Activated CD4-positive, alpha-beta T cell treated with anti-CD3 and anti-CD28 coated beads, Interleukin-2, amount 10 ng/mL, durations not matched to agents 24 days and 14 days (primary cell): ENCODE measurements at regions of chr17 and their contacts with region 1.

Region 1: DNA sequence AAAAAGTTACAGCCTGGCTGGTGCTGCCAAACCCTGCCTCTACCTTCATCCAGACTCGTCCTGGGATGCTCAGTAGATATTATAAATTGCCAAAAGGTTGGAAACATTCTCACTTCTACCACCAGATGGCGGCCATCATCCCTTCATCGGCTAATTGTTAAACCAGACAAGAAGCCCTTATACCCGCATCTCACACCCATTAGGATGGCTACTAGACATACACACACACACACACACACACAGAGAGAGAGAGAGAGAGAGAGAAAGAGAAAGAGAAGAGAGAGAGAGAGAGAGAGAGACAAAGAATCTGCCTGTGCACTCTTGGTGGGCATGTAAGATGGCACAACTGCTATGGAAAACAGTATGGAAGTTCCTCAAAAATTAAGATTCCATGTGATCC is 15.0 kb upstream of the SCIMP start:
- DNase-seq: peak; percentile 89
- H3K4me3 Mint-ChIP-seq: no peak overlapping the region
- H3K27ac Mint-ChIP-seq: no peak overlapping the region
- H3K4me1 Mint-ChIP-seq: peaks cover 3% of the 10 kb centered on the region
- H3K27me3 Mint-ChIP-seq: no peaks in the 10 kb centered on the region

Region 2: DNA sequence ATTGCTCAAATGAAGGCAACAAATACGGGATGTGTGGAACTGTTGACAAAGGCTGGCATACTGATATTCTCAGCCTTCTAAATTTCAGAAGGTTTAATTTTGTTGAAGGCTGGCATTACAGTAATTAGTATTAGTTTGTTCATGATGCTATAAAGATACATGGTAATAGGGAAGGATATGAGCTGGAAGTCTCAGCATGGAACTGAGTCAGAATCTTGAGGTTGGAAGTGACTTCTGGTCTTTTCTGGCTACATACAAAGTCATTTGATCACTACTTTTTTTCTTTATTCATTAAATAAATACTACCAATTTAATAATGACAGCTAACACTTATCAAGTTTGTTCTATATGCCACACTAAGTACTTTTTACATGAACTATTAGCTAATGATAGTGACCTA is 55.0 kb after region 1 on chr17:
- intact Hi-C with region 1: loop called (anchors 10 kb)
- DNase-seq: no peak
- H3K4me3 Mint-ChIP-seq: no peak overlapping the region
- H3K27ac Mint-ChIP-seq: no peak overlapping the region
- H3K4me1 Mint-ChIP-seq: peaks cover 15% of the 10 kb centered on the region
- H3K27me3 Mint-ChIP-seq: no peaks in the 10 kb centered on the region

Region 3: GRCh38 chr17:5364156-5364555 is 114.5 kb after region 1 on chr17:
- intact Hi-C with region 1: loop called (anchors 10 kb)
- DNase-seq: no peak
- H3K4me3 Mint-ChIP-seq: no peak overlapping the region
- H3K27ac Mint-ChIP-seq: no peak overlapping the region
- H3K4me1 Mint-ChIP-seq: no peaks in the 10 kb centered on the region
- H3K27me3 Mint-ChIP-seq: no peaks in the 10 kb centered on the region

Region 4: DNA sequence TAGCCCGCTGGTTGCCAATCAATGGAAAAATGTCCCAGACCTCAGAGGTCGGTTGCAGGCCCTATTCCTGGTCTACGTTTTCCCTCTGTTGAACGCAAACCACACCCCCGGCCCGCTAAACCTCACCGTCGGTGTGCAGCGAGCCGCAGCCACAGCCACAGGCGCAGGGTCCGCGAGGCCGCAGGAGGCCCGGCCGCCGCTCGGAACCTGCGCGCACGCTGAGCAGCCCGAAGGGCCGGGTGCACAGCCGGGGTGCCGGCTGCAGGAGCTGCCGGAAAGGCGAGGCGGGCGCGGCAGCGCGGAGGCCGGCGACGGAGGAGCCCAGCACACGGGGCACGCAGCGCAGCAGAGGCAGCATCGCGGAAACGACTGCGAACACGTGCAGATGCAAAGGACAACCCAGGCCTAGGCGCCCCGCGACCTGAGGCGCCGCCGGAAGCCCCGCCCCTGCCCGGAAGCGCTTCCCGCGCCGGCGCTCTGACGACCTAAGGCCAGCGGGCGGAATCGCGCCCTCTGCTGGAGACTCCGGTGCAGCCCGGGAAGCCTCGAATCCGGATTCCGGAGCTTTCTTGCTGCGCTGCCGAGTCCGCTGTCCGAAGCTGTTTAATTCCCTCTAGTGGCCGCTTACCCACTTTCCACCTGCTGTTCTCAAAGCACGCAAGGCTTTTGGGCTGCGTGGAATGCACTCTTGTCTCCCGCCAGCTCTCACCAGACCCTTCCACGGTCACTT is 189.3 kb after region 1 on chr17 and contains the start of gene C1QBP:
- intact Hi-C with region 1: loop called (anchors 10 kb)
- DNase-seq: peak; percentile 98
- H3K4me3 Mint-ChIP-seq: peak within 1 kb of the TSS; percentile 94
- H3K27ac Mint-ChIP-seq: peak within 1 kb of the TSS; percentile 88
- H3K4me1 Mint-ChIP-seq: peaks cover 34% of the 10 kb centered on the region
- H3K27me3 Mint-ChIP-seq: no peaks in the 10 kb centered on the region
- total RNA-seq, gene C1QBP: 451 TPM in 2 replicates

Region 5: DNA sequence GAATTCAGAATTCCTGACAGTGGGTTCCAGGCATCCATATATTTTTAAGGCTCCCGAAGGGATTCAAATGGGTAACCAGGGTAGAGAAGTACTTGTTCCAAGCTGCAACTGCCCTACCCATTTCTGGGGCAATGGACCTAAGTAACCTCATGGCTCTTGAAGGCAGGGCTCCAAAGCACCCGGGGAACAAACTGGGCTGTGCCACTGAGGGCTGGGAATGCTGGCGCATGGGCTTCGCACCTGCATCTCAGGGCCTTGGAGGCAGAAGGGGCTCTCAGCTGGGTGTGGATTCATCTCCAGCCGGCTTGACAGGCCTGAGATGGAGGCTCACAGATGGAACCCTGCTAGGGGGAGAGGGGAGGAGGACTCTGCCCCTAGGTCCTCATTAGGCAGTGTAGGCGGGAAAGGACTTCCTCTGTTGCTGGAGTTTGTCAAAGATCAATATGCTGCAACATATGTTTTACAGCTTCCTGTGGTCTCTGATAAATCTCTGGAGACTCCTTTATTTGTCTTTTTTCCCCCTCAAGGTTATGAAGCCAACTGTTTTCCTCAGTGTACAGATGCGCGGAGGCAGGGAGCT is 567.0 kb after region 1 on chr17:
- intact Hi-C with region 1: no loop called
- DNase-seq: no peak
- H3K4me3 Mint-ChIP-seq: no peak overlapping the region
- H3K27ac Mint-ChIP-seq: no peak overlapping the region
- H3K4me1 Mint-ChIP-seq: no peaks in the 10 kb centered on the region
- H3K27me3 Mint-ChIP-seq: peaks cover 2% of the 10 kb centered on the region

Region 6: DNA sequence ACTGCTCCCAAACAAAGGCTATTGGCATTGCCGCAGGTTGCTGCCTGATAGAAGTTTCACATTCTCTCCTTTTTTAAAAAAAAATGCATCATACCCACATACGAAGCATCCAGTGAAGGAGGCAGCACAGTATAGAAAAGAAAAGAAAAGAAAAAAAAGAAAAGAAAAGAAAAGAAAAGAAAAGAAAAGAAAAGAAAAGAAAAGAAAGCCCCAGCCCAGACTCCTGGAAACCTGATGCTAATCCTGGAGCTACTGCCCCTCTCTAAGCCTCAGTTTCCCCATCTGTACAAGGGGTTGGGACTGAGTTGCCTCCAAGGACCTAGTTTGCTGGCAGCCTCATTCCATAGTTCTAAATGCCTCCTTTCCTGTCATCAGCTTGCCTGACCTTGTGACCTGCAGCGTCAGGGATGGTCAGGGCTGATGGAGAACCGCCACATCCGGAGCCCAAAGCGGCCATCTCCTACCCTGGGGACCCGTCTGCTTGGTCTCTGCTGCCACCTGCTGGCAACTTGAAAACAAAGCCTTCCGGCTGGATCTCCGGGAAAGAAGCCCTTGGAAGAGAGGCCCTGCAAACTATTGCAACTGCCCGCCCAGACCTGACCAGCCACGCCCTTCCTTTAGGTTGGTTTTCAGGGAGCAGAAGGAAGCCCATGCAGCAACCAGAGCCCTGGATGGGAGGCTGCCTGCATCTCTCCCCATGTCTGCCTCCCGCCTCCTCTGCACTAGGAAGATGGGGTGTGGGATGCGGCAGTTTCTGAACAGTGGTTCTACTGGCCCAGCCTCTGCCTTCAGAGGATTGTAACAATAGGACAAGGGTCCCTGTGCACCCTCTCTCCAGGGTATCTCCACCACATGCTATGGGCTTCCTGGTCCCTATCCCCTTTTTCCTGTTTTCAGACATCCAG is 1172.3 kb after region 1 on chr17:
- intact Hi-C with region 1: loop called (anchors 10 kb)
- DNase-seq: peak; percentile 91
- H3K4me3 Mint-ChIP-seq: no peak overlapping the region
- H3K27ac Mint-ChIP-seq: no peak overlapping the region
- H3K4me1 Mint-ChIP-seq: peaks cover 3% of the 10 kb centered on the region
- H3K27me3 Mint-ChIP-seq: peaks cover 48% of the 10 kb centered on the region